ENCODE measurements at regions of chr18 and their contacts with region 1.

Region 1: GRCh38 chr18:31101183-31102024 is 817 bp downstream of the DSC2 start:
- DNase-seq: peak; percentile 23
- ATAC-seq: peak; percentile 7
- H3K4me3 ChIP-seq: peak overlapping the region; percentile 72
- H3K27ac ChIP-seq: peak overlapping the region; percentile 86
- H3K4me1 ChIP-seq: peaks cover 65% of the 10 kb centered on the region
- H3K27me3 ChIP-seq: no peaks in the 10 kb centered on the region
- CTCF ChIP-seq: 0 out of 2 replicates have a peak, but pooled peaks have one; percentile 25

Region 2: DNA sequence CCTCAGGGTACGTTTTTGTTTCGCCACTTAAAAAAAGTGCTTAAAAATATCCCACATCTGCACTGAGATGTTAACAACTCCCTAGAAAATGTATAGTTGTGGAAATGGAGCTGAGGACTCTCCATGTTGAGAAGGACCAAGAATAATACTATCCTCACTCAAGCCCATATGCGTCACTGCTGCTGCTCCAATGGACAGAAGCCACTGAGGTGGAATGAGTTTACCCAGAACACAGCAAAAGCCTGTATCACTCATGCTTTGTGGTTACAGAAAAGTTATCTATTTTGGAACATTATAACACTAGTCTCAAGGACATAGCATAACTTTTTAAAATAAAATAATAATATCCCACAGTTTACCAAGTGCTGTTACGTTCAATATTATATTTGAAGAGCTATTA is 90.8 kb before region 1 on chr18:
- CTCF ChIA-PET with region 1: no interaction called
- POLR2A ChIA-PET with region 1: no interaction called
- intact Hi-C with region 1: loop called (anchors 2 kb)
- DNase-seq: no peak
- ATAC-seq: no peak
- H3K4me3 ChIP-seq: no peak overlapping the region
- H3K27ac ChIP-seq: peak overlapping the region; percentile 53
- H3K4me1 ChIP-seq: peaks cover 19% of the 10 kb centered on the region
- H3K27me3 ChIP-seq: no peaks in the 10 kb centered on the region
- CTCF ChIP-seq: no peak

Region 3: GRCh38 chr18:31185186-31185950 is 84.0 kb after region 1 on chr18:
- CTCF ChIA-PET with region 1: no interaction called
- POLR2A ChIA-PET with region 1: no interaction called
- intact Hi-C with region 1: loop called (anchors 2 kb)
- DNase-seq: peak; percentile 82
- ATAC-seq: peak; percentile 99
- H3K4me3 ChIP-seq: no peak overlapping the region
- H3K27ac ChIP-seq: peak overlapping the region; percentile 80
- H3K4me1 ChIP-seq: peaks cover 14% of the 10 kb centered on the region
- H3K27me3 ChIP-seq: no peaks in the 10 kb centered on the region
- CTCF ChIP-seq: no peak

Region 4: GRCh38 chr18:31206787-31207381 is 105.5 kb after region 1 on chr18:
- CTCF ChIA-PET with region 1: no interaction called
- POLR2A ChIA-PET with region 1: no interaction called
- intact Hi-C with region 1: loop called (anchors 2 kb)
- DNase-seq: peak; percentile 85
- ATAC-seq: peak; percentile 90
- H3K4me3 ChIP-seq: peak overlapping the region; percentile 43; the same call in 1 of the 2 replicates
- H3K27ac ChIP-seq: peak overlapping the region; percentile 91
- H3K4me1 ChIP-seq: peaks cover 26% of the 10 kb centered on the region
- H3K27me3 ChIP-seq: no peaks in the 10 kb centered on the region
- CTCF ChIP-seq: 0 out of 2 replicates have a peak, but pooled peaks have one; percentile 15

Region 5: GRCh38 chr18:31512203-31512764 is 410.9 kb after region 1 on chr18:
- CTCF ChIA-PET with region 1: no interaction called
- POLR2A ChIA-PET with region 1: no interaction called
- intact Hi-C with region 1: loop called (anchors 2 kb)
- DNase-seq: peak; percentile 67
- ATAC-seq: peak; percentile 83
- H3K4me3 ChIP-seq: no peak overlapping the region
- H3K27ac ChIP-seq: peak overlapping the region; percentile 83
- H3K4me1 ChIP-seq: peaks cover 45% of the 10 kb centered on the region
- H3K27me3 ChIP-seq: no peaks in the 10 kb centered on the region
- CTCF ChIP-seq: no peak